Heart left ventricle (tissue), 16 donors: ENCODE measurements at regions of chr5 and their contacts with region 1.

Region 1: GRCh38 chr5:17132444-17133083 is 84.9 kb upstream of the BASP1 start:
- DNase-seq: no peak
- ATAC-seq: no peak
- H3K4me3 ChIP-seq: no peak overlapping the region
- H3K27ac ChIP-seq: no peak overlapping the region
- H3K4me1 ChIP-seq: peaks cover 0 to 7% (median 0%) of the 10 kb centered on the region in 12 donors
- H3K27me3 ChIP-seq: no peaks in the 10 kb centered on the region
- CTCF ChIP-seq: peak; percentile 47 to 76 (median 70)
- POLR2A ChIP-seq: no peak

Region 2: GRCh38 chr5:16784843-16785791 is 347.4 kb before region 1 on chr5:
- intact Hi-C with region 1: loop called (anchors 2 to 5 kb)
- DNase-seq: no peak
- ATAC-seq: no peak
- H3K4me3 ChIP-seq: no peak overlapping the region
- H3K27ac ChIP-seq: no peak overlapping the region
- H3K4me1 ChIP-seq: peaks cover 0 to 10% (median 0%) of the 10 kb centered on the region in 12 donors
- H3K27me3 ChIP-seq: no peaks in the 10 kb centered on the region
- CTCF ChIP-seq: no peak
- POLR2A ChIP-seq: no peak

Region 3: DNA sequence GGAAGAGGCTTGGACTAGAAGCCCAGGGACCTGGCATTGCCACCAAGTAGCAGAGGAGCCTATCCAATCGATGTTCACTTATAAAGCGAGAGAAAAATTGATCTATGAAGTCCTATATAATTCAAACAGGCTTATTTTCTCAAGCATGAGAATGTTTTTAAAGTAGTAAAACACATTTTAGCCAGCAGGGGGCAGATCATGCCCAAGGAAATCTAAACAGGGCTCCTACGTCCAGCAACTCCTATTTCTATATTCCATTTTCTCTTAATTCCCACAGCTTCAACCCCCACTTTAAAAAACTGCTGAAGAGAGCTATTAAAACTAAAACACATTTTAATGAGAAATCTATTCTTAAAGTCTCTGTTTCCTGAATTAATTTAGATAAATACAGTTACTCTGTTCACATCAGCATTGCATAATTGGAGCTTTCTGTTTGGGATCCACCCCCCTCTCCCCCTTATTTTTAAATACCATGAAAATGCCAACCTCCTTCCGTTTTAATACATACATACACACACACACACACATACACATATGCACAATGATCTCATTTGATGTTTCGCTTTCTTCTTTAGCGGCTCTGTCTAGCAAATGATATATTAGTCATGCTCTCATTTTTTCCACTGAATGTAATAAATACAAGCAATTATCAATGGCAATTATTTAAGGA is 341.4 kb before region 1 on chr5:
- intact Hi-C with region 1: loop called (anchors 2 to 5 kb)
- DNase-seq: no peak
- ATAC-seq: no peak
- H3K4me3 ChIP-seq: peak overlapping the region in 1 of 12 donors; percentile 1
- H3K27ac ChIP-seq: no peak overlapping the region
- H3K4me1 ChIP-seq: peaks cover 0 to 4% (median 0%) of the 10 kb centered on the region in 12 donors
- H3K27me3 ChIP-seq: no peaks in the 10 kb centered on the region
- CTCF ChIP-seq: peak; percentile 66 to 84 (median 79)
- POLR2A ChIP-seq: no peak